ENCODE measurements at regions of chr15 and their contacts with region 1.

Region 1: DNA sequence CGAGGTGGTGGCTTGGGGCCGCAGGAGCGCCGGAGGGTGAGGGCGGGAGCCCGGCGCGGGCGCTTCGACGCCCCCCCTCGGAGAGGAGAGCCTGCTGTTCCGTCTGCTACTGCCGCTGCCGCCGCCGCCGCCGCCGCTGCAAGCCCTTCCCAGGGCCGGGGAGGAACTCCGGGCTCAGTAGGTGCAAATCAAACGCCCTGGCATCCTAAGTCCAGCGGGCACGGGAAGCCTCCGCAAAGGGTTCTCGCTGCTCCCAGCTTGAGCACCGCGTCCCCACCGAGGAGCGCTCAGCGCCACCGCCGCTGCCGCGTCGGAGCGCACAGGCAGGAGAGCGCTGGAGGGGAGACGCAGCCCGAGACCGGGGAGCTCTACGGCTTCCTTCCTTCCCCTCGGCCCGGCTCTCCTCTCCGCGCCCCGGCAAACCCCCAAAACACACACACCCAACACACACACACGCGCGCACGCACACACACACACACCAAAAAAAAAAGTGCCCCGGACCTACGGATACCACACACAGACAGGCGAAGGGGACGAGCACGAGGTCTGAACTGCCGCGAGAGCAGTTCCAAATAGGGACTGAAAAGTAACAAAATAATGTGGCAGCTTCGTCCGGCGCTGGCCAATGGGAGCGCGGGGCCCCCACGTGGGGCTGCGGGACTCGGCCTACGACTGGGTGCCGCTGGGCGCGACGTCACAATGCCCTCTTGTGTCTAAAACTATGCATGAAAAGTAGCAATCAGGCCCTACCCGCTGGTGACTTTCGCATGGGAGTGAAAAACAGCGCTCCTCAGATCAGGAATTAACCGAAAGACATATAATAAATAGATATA is at the start of gene TLE3:
- DNase-seq: peak; percentile 96 to 99 (median 98)
- ATAC-seq: peak; percentile 56 to 70
- H3K4me3 Mint-ChIP-seq: peak within 1 kb of the TSS; percentile 89 to 100 (median 98)
- H3K27ac Mint-ChIP-seq: peak within 1 kb of the TSS; percentile 98 to 100 (median 98)
- H3K4me1 Mint-ChIP-seq: peaks cover 35 to 62% (median 52%) of the 10 kb centered on the region in 4 donors
- H3K27me3 Mint-ChIP-seq: peaks cover 0 to 4% (median 0%) of the 10 kb centered on the region in 5 donors
- polyA plus RNA-seq, gene TLE3: 9.9 to 32.6 (median 13.6) TPM

Region 2: GRCh38 chr15:69713726-69714559 is 383.6 kb before region 1 on chr15:
- POLR2A ChIA-PET with region 1: interaction called, 38 read pairs
- DNase-seq: peak in 9 of 10 donors; percentile 33 to 85 (median 71)
- ATAC-seq: peak; percentile 92 to 96
- H3K4me3 Mint-ChIP-seq: peak overlapping the region; percentile 1 to 79 (median 68)
- H3K27ac Mint-ChIP-seq: peak overlapping the region; percentile 6 to 95 (median 86)
- H3K4me1 Mint-ChIP-seq: peaks cover 28 to 65% (median 61%) of the 10 kb centered on the region in 4 donors
- H3K27me3 Mint-ChIP-seq: no peaks in the 10 kb centered on the region

Region 3: GRCh38 chr15:69732133-69732532 is 365.4 kb before region 1 on chr15:
- POLR2A ChIA-PET with region 1: interaction called, 12 read pairs
- DNase-seq: no peak
- ATAC-seq: no peak
- H3K4me3 Mint-ChIP-seq: no peak overlapping the region
- H3K27ac Mint-ChIP-seq: no peak overlapping the region
- H3K4me1 Mint-ChIP-seq: peaks cover 5 to 21% (median 11%) of the 10 kb centered on the region in 4 donors
- H3K27me3 Mint-ChIP-seq: peaks cover 3 to 20% (median 4%) of the 10 kb centered on the region in 5 donors

Region 4: DNA sequence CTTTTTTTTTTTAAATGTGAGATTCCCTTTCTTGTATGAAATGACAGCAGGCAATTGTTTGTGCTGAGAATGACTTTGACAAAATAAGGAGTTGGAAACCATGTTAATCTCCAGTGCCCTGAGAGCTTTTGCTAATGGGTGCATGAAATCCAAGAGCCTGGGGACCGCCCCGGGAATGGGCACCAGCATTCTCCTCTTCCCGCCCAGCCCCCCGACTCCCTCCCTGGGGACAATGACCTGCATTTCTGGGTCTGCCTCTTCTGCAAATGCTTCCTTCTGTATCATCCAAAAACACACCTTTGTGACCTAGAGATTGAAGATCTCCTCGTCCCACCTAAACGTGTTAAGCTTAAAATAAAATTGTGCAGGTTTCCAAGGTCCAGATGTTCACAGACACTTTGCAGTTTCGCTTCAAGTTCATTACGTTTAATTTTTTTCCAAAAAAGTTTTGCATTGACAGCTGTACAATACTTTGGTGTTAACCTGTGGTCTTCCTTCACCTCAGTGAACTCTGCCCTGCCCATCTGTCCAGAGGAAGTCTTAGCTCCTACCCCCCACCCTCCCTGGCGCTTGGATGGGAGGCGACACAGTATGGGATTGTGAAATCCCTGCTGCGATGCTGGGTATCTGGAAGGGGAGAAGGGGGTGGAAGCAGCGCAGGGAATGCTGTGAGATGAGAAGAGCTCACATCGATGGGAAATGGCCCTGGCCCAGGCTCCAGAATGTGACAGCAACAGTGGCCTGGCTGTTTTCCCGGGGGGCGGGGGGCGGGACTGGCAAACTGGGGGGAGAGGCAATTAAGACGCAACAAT is 50.0 kb before region 1 on chr15:
- POLR2A ChIA-PET with region 1: no interaction called
- DNase-seq: no peak
- ATAC-seq: no peak
- H3K4me3 Mint-ChIP-seq: no peak overlapping the region
- H3K27ac Mint-ChIP-seq: peak overlapping the region in 2 of 10 donors; percentile 38 to 57
- H3K4me1 Mint-ChIP-seq: peaks cover 0 to under 1% (median 0%) of the 10 kb centered on the region in 4 donors
- H3K27me3 Mint-ChIP-seq: no peaks in the 10 kb centered on the region

Region 5: DNA sequence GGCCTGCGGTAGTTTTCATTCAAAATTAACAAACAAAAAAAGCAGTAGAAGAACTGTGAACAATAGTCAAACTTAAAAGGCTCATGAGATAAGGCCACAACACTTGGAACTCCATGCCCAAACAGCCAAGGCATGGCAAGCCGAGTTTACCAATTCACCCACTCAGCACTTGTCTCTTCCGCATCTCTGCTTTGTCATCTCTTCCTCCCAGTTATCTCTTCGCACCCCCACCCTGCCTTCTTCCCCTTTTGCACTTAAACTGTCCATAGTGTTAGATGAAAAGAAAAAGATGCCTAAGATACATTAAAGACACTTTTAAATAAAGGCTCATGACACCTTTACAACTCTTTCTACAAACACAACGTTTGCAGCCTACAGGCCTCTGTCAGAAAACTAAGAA is 10.9 kb before region 1 on chr15:
- POLR2A ChIA-PET with region 1: interaction called, 10 read pairs
- DNase-seq: no peak
- ATAC-seq: no peak
- H3K4me3 Mint-ChIP-seq: peak overlapping the region in 3 of 10 donors; percentile 11 to 27 (median 16)
- H3K27ac Mint-ChIP-seq: peak overlapping the region in 5 of 10 donors; percentile 7 to 69 (median 29)
- H3K4me1 Mint-ChIP-seq: peaks cover 48 to 90% (median 84%) of the 10 kb centered on the region in 4 donors
- H3K27me3 Mint-ChIP-seq: no peaks in the 10 kb centered on the region

Region 6: DNA sequence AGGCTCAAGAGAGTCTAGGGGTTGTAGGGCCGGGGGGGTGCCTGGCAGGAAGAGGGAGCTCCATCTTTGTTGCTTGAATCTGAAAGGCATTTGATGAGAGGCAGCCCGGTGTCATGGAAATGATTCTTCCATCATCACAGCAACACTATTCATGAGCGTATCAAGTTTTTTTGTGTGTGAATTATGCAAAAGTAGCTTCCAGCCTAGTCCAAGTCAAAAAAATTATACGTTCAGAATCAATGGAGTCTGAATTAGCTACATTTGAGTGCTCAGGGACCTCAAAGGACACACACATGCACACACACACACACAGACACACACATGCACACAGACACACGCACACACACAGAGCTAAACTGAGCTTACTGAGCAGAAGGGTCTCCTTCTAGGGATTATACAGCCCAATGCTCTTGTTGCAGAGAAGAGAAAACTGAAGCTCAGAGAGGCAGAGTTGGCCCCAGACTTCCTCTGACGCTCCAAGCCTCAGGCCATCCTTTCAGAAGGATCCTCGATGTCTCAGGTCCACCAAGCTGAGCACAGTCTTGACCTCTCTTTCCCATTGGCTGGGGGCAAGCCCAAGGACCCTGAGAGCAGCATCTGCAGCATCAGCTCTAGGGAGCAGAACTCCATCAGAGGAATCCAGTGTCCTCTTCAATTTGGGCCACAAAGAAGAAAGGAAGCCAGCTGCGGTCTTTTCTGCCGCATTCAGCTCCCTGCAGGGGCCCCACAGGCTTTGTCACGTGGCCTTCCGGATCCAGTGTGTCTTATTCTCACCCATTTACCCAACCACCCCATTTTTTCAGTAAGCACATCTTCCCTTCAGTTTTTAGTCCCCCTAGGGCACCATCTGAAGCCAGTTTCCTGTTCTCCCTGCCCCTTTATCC is 437.8 kb after region 1 on chr15:
- POLR2A ChIA-PET with region 1: interaction called, 35 read pairs
- DNase-seq: peak; percentile 41 to 85 (median 69)
- ATAC-seq: peak; percentile 84 to 88
- H3K4me3 Mint-ChIP-seq: peak overlapping the region; percentile 83 to 96 (median 91)
- H3K27ac Mint-ChIP-seq: peak overlapping the region; percentile 84 to 98 (median 95)
- H3K4me1 Mint-ChIP-seq: peaks cover 36 to 83% (median 75%) of the 10 kb centered on the region in 4 donors
- H3K27me3 Mint-ChIP-seq: no peaks in the 10 kb centered on the region

Measured in naive thymus-derived CD8-positive, alpha-beta T cell (primary cell).